ENCODE measurements at regions of chr1 and their contacts with region 1.

Region 1: DNA sequence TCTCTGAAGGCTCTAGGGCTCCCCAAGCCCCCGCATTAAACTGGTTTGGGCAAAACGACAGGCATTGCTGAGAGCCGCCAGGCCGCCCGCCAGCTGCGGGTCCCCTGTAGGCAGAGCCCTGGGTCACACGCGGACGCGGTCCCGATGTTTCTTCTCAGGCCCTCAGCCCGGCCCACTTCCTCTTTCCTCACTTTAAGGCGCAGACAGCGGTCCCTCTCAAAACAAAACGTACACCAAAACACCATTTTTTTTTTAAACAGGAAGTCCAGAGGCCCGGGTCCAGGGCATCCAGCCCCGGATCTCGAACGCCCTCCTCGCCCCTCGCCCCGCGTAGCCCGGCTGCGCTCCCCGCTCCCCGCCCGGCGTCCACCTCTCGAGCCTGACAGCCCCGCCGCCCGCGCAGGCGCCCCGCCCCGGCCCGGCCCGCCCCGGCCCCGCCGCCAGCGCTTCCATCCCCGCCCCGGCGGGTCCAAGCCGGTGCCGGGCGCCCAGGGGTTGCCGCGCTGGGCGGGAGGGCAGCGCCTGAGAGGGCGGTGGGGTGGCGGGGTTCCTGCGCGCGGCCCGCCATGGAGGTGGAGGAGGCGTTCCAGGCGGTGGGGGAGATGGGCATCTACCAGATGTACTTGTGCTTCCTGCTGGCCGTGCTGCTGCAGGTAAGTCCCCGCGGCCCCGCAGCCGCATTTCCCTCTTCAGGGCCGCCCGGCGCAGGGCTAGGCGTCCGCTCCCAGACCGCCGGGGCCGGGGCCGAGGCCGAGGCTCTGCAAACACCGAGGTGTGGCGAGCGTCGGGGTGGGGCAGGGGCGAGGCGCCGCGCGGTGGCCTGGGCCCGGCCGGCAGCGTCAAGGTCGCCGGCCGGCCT is at the start of gene SLC22A15:
- DNase-seq: peak; percentile 31
- H3K4me3 ChIP-seq: peak within 1 kb of the TSS; percentile 53 to 59
- H3K27ac ChIP-seq: peak within 1 kb of the TSS; percentile 58 to 69
- H3K4me1 ChIP-seq: no peaks in the 10 kb centered on the region
- H3K27me3 ChIP-seq: no peaks in the 10 kb centered on the region
- CTCF ChIP-seq: peak in 1 of 4 experiments; percentile 7
- POLR2A ChIP-seq: no peak
- total RNA-seq, gene SLC22A15: 2.0 to 6.7 TPM

Region 2: GRCh38 chr1:115807723-115808122 is 168.6 kb before region 1 on chr1:
- intact Hi-C with region 1: loop called (anchors 10 kb)
- DNase-seq: peak; percentile 80
- H3K4me3 ChIP-seq: no peak overlapping the region
- H3K27ac ChIP-seq: no peak overlapping the region
- H3K4me1 ChIP-seq: peaks cover 6% of the 10 kb centered on the region
- H3K27me3 ChIP-seq: no peaks in the 10 kb centered on the region
- CTCF ChIP-seq: peak; percentile 28 to 79 (median 70)
- POLR2A ChIP-seq: no peak

Region 3: DNA sequence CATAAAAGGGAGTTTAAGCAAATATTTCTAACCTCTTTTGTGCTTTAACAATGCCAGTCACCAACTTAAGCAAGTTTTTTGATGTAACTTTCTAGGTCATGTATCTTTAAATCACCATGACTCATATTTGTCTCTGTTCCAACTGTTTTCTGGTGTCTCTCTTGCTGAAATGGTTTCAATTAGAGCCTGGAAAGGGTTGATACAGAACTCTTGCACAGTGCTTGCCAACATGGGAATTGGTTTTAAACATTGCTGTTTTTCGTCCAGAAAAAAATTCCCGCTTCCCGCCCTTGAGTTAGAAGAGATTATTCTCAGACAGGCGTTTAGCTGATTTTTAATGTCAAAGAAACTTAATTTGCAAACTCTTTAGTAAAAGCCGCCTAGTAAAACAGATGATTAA is 46.4 kb before region 1 on chr1:
- intact Hi-C with region 1: no loop called
- DNase-seq: no peak
- H3K4me3 ChIP-seq: no peak overlapping the region
- H3K27ac ChIP-seq: no peak overlapping the region
- H3K4me1 ChIP-seq: no peaks in the 10 kb centered on the region
- H3K27me3 ChIP-seq: no peaks in the 10 kb centered on the region
- CTCF ChIP-seq: no peak
- POLR2A ChIP-seq: no peak